B cell (primary cell): ENCODE measurements at regions of chr4 and their contacts with region 1.

Region 1: DNA sequence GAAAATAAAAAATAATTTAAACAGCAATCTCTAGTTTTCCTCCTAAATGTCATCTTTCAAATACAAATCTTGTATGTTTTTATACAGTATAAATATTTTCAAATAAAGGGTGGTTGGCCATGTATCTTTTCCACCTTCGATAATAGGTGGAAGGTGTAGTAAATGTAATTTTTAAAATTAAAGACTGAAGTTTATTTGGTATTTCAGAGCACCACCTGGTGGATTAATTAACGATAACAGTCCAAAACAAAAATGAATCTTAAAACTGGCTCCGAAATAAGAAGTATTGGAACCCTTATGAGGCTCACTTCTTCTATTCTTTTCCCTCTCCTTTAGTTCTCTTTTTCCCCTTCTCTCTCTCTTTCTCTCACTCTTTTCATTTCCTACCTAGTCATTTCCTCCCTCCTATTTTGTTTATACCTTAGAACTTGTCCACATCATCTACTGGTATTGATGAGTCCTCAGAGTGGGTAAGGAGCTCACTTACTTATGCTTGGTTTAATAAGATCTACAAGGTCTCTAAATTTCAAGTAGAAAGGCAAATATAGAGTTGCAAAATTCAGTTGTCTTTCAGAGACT is 82.9 kb upstream of the EXOC1L start:
- DNase-seq: peak; percentile 23
- ATAC-seq: no peak
- H3K4me3 ChIP-seq: no peak overlapping the region
- H3K4me3 Mint-ChIP-seq: no peak overlapping the region
- H3K27ac ChIP-seq: no peak overlapping the region
- H3K27ac Mint-ChIP-seq: no peak overlapping the region
- H3K4me1 ChIP-seq: no peaks in the 10 kb centered on the region
- H3K4me1 Mint-ChIP-seq: no peaks in the 10 kb centered on the region
- H3K27me3 ChIP-seq: peaks cover 0 to 10% (median 4%) of the 10 kb centered on the region in 4 experiments
- H3K27me3 Mint-ChIP-seq: peaks cover 55% of the 10 kb centered on the region
- CTCF ChIP-seq: peak; percentile 68

Region 2: GRCh38 chr4:54322818-54323417 is 1413.8 kb before region 1 on chr4:
- CTCF ChIA-PET with region 1: no interaction called
- POLR2A ChIA-PET with region 1: no interaction called
- intact Hi-C with region 1: loop called (anchors 5 kb)
- DNase-seq: peak; percentile 60
- ATAC-seq: peak; percentile 28
- H3K4me3 ChIP-seq: no peak overlapping the region
- H3K4me3 Mint-ChIP-seq: no peak overlapping the region
- H3K27ac ChIP-seq: no peak overlapping the region
- H3K27ac Mint-ChIP-seq: no peak overlapping the region
- H3K4me1 ChIP-seq: peaks cover 0 to 2% of the 10 kb centered on the region in 2 donors
- H3K4me1 Mint-ChIP-seq: peaks cover 3% of the 10 kb centered on the region
- H3K27me3 ChIP-seq: no peaks in the 10 kb centered on the region
- H3K27me3 Mint-ChIP-seq: peaks cover 8% of the 10 kb centered on the region
- CTCF ChIP-seq: peak; percentile 65

Region 3: DNA sequence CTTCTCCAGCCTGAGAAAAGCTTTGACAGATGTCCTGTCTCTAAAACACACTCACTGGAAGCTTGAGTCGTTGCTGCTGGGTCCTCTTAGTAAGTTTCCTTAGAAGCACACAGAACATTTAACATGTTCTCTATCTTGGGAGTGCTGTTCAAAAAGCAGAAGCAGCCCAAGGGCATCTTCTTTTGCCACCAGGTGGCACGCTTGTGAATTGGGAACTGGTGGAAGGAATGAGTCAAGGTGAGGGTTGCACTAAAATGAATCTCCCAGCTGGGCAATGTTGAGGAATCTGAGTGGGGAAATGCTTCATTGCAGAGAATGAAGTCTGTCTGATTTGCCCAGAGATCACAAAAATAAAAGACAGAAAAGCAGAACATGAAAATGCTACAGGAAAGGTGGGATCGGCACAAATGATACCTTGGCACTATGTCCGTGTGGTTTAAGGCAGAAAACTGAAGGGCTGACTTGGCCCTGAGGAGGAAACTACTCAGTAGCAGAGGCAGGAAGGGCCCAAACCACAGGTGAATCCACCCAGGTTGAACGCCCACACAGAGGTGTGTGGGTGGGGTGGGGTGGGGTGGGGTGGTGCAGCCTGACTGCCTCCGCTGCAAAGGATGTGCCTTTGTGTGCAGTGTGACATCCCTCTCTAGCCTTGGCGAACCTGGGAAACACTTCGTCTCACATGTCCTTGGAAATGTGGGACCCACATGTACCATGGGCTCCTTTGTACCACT is 1052.9 kb before region 1 on chr4:
- CTCF ChIA-PET with region 1: no interaction called
- POLR2A ChIA-PET with region 1: no interaction called
- intact Hi-C with region 1: loop called (anchors 5 kb)
- DNase-seq: peak; percentile 71
- ATAC-seq: no peak
- H3K4me3 ChIP-seq: peak overlapping the region in 1 of 5 experiments; percentile 17
- H3K4me3 Mint-ChIP-seq: peak overlapping the region; percentile 68
- H3K27ac ChIP-seq: no peak overlapping the region
- H3K27ac Mint-ChIP-seq: no peak overlapping the region
- H3K4me1 ChIP-seq: peaks cover 41 to 44% of the 10 kb centered on the region in 2 donors
- H3K4me1 Mint-ChIP-seq: peaks cover 44% of the 10 kb centered on the region
- H3K27me3 ChIP-seq: no peaks in the 10 kb centered on the region
- H3K27me3 Mint-ChIP-seq: no peaks in the 10 kb centered on the region
- CTCF ChIP-seq: peak; percentile 66

Region 4: DNA sequence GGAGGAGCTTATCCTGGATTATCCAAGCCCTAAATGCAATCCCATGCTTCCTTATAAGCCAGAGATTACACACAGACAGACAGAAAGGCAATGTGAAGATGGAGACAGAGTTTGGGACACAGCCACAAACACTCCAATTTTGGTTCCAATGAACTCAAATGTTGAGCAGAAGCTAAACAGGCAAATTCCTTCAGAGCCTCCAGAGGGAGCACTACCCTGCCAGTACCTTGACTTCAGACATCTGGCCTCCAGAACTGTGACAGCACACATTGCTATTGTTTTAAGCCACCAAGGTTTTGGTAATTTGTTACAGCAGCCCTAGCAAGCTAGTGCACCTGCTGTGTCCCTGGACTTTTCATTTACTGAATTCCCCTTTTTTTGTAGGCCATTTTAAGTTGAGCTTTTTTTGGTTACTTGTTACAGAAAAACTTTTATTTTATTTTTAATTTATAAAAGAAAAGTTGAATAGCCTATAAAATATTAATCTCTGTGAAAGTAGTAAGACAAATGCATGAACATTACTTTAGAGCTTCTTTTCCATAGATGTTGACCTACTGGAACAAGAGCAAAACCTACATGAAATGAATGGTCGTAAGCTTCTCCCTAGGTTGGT is 424.1 kb before region 1 on chr4:
- CTCF ChIA-PET with region 1: interaction called, 6 read pairs
- POLR2A ChIA-PET with region 1: no interaction called
- intact Hi-C with region 1: loop called (anchors 2 kb)
- DNase-seq: peak; percentile 34
- ATAC-seq: peak; percentile 39
- H3K4me3 ChIP-seq: no peak overlapping the region
- H3K4me3 Mint-ChIP-seq: no peak overlapping the region
- H3K27ac ChIP-seq: no peak overlapping the region
- H3K27ac Mint-ChIP-seq: no peak overlapping the region
- H3K4me1 ChIP-seq: no peaks in the 10 kb centered on the region
- H3K4me1 Mint-ChIP-seq: no peaks in the 10 kb centered on the region
- H3K27me3 ChIP-seq: no peaks in the 10 kb centered on the region
- H3K27me3 Mint-ChIP-seq: peaks cover 17% of the 10 kb centered on the region
- CTCF ChIP-seq: peak; percentile 53

Region 5: DNA sequence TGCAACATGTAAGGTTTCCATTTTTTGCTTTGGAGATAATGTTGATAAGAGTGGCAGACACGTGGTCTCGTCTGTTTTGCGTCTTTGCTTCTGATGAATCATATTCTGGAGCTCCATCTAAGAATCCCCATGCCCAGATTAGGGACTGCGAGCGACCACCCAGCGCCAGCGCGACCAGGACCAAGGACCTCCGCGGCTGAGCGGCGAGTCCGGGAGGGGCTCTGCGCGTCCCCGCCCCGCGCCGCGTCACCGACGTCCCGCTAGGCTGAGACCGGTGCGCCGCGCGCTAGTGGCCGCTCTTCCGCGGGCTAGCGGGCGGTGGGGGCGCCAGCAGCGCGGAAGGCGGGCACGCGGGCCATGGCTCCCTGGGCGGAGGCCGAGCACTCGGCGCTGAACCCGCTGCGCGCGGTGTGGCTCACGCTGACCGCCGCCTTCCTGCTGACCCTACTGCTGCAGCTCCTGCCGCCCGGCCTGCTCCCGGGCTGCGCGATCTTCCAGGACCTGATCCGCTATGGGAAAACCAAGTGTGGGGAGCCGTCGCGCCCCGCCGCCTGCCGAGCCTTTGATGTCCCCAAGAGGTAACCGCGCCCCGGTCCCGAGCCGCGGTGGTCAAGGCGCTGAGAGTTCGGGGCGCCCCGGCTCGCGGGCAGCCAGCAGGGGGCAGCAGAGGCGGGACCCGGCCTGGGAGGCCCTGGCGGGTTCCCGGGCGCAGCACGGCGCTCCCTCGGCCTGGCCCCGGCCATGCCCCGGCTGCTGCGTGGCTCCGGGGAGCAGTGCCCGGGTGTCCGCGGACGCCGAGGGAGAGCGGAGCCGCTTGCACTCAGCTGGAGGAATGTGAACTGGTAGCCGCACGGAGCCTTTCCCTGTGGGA is 390.5 kb before region 1 on chr4 and contains the start of gene SRD5A3:
- CTCF ChIA-PET with region 1: interaction called, 4 read pairs
- POLR2A ChIA-PET with region 1: no interaction called
- intact Hi-C with region 1: loop called (anchors 1 kb)
- DNase-seq: peak; percentile 85
- ATAC-seq: peak; percentile 89
- H3K4me3 ChIP-seq: peak within 1 kb of the TSS; percentile 56 to 84 (median 73)
- H3K4me3 Mint-ChIP-seq: peak within 1 kb of the TSS; percentile 85
- H3K27ac ChIP-seq: peak within 1 kb of the TSS; percentile 69 to 85
- H3K27ac Mint-ChIP-seq: peak within 1 kb of the TSS; percentile 94
- H3K4me1 ChIP-seq: peaks cover 4 to 9% of the 10 kb centered on the region in 2 donors
- H3K4me1 Mint-ChIP-seq: peaks cover 10% of the 10 kb centered on the region
- H3K27me3 ChIP-seq: no peaks in the 10 kb centered on the region
- H3K27me3 Mint-ChIP-seq: no peaks in the 10 kb centered on the region
- CTCF ChIP-seq: peak; percentile 99
- total RNA-seq, gene SRD5A3: 3.6 and 4.0 TPM in 2 replicates

Region 6: GRCh38 chr4:55409468-55410171 is 327.1 kb before region 1 on chr4:
- CTCF ChIA-PET with region 1: interaction called, 12 read pairs
- POLR2A ChIA-PET with region 1: no interaction called
- intact Hi-C with region 1: no loop called
- DNase-seq: peak; percentile 85
- ATAC-seq: peak; percentile 93
- H3K4me3 ChIP-seq: no peak overlapping the region
- H3K4me3 Mint-ChIP-seq: peak overlapping the region; percentile 36
- H3K27ac ChIP-seq: peak overlapping the region in 1 of 2 donors; percentile 77
- H3K27ac Mint-ChIP-seq: peak overlapping the region; percentile 71
- H3K4me1 ChIP-seq: peaks cover 14% of the 10 kb centered on the region in 2 donors
- H3K4me1 Mint-ChIP-seq: peaks cover 30% of the 10 kb centered on the region
- H3K27me3 ChIP-seq: no peaks in the 10 kb centered on the region
- H3K27me3 Mint-ChIP-seq: no peaks in the 10 kb centered on the region
- CTCF ChIP-seq: peak; percentile 73

Region 7: DNA sequence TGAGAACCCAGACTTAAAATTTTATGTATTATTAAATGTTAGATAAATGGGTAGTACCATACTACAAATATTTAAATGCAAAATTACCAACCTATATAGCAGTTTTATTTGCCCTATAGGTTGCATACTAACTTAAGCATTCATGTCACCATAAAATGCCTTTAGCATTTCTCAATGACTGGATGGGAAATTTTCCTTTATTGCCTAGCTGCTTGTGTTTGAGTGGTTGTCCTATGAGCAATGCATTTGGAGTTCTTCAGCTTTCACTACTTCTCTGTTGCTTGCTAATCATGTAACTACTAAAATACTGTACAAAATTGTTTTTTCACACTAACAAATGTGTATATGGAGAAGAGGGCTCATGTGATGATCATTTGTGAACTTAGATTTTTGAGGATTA is 167.9 kb after region 1 on chr4:
- CTCF ChIA-PET with region 1: no interaction called
- POLR2A ChIA-PET with region 1: no interaction called
- intact Hi-C with region 1: no loop called
- DNase-seq: no peak
- ATAC-seq: no peak
- H3K4me3 ChIP-seq: no peak overlapping the region
- H3K4me3 Mint-ChIP-seq: no peak overlapping the region
- H3K27ac ChIP-seq: no peak overlapping the region
- H3K27ac Mint-ChIP-seq: no peak overlapping the region
- H3K4me1 ChIP-seq: no peaks in the 10 kb centered on the region
- H3K4me1 Mint-ChIP-seq: peaks cover 6% of the 10 kb centered on the region
- H3K27me3 ChIP-seq: no peaks in the 10 kb centered on the region
- H3K27me3 Mint-ChIP-seq: no peaks in the 10 kb centered on the region
- CTCF ChIP-seq: no peak